Activated B cell treated with CpG ODN at 0.5 μM for 24 hours (primary cell): ENCODE measurements at regions of chr1 and their contacts with region 1.

Region 1: GRCh38 chr1:206030714-206031113 is 7.0 kb upstream of the CTSE start:
- DNase-seq: peak; percentile 56
- ATAC-seq: peak; percentile 79
- H3K4me3 Mint-ChIP-seq: no peak overlapping the region
- H3K27ac Mint-ChIP-seq: peak overlapping the region; percentile 72
- H3K4me1 Mint-ChIP-seq: peaks cover 51% of the 10 kb centered on the region
- H3K27me3 Mint-ChIP-seq: no peaks in the 10 kb centered on the region
- CTCF ChIP-seq: peak; percentile 75

Region 2: GRCh38 chr1:205977402-205978014 is 53.2 kb before region 1 on chr1:
- CTCF ChIA-PET with region 1: interaction called, 60 read pairs
- POLR2A ChIA-PET with region 1: no interaction called
- intact Hi-C with region 1: no loop called
- DNase-seq: peak; percentile 65
- ATAC-seq: peak; percentile 95
- H3K4me3 Mint-ChIP-seq: no peak overlapping the region
- H3K27ac Mint-ChIP-seq: no peak overlapping the region
- H3K4me1 Mint-ChIP-seq: no peaks in the 10 kb centered on the region
- H3K27me3 Mint-ChIP-seq: peaks cover 2% of the 10 kb centered on the region
- CTCF ChIP-seq: peak; percentile 83

Region 3: DNA sequence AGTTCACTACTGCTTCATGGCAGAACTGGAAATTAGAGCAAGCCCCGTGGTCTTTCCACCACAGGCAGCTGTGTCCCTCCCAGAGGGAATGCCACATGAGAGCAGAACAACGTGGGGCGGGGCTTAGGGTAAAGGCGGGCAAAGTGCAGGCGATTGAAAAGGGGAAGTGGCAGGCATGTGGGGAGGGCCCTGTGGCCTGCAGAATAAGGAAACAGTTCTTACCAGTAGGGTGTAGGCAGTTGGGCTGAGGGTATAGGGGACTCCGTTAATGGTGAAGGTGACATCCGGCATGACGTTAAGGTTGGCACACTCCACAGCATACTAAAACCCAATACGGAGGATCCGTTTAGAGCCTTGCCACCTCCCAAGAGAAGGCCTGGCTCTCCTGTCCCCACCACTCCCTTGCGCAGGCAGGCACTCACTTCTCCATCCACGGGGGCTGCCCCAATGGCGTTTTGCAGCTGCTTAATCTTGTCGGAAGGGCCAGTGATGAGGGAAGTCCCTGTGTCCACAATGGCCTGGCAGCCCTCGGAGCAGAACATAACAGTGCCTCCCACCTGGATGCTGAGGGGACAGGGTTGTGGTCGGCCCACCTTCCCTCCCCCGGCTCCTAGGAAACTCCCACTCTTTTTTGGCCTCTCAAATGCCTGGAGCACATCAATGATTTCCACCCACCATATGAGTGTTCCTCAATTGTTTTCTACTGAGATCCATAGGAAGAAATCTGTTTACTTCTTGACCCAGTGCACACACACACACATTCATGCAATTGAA is 18.4 kb before region 1 on chr1:
- CTCF ChIA-PET with region 1: interaction called, 8 read pairs
- POLR2A ChIA-PET with region 1: interaction called, 5 read pairs
- intact Hi-C with region 1: loop called (anchors 1 kb)
- DNase-seq: peak; percentile 79
- ATAC-seq: peak; percentile 99
- H3K4me3 Mint-ChIP-seq: peak overlapping the region; percentile 70
- H3K27ac Mint-ChIP-seq: peak overlapping the region; percentile 91
- H3K4me1 Mint-ChIP-seq: peaks cover 27% of the 10 kb centered on the region
- H3K27me3 Mint-ChIP-seq: no peaks in the 10 kb centered on the region
- CTCF ChIP-seq: no peak

Region 4: DNA sequence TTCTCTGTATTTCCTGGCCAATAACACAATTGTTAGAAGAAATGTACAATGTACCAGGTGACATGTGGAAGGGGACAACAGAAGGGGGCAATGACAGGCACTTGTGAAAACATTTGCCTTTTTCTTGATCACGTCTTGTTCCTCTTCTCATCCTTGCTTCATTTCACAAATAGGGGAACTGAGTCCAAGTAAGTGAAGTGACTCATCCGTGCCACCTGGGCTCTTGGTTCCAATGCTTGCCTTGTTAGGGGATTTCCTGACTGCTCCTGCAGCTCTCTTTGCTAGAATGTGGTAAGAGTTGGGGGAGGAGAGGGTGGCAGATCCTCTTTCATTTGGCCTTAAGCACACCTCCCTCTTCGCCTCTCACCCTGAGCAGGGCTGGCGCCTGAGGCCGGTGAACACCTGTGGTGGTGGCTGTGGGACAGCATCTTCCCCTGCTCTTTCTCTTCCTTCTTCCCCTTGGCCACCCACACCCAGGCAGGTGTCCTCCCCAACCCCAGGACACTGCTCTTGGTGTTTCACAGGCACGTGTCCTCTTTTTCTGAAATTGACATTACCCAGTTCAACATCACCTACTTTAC is 20.0 kb after region 1 on chr1:
- CTCF ChIA-PET with region 1: interaction called, 30 read pairs
- POLR2A ChIA-PET with region 1: interaction called, 101 read pairs
- intact Hi-C with region 1: loop called (anchors 1 kb)
- DNase-seq: peak; percentile 71
- ATAC-seq: peak; percentile 86
- H3K4me3 Mint-ChIP-seq: peak overlapping the region; percentile 58
- H3K27ac Mint-ChIP-seq: peak overlapping the region; percentile 95
- H3K4me1 Mint-ChIP-seq: peaks cover 94% of the 10 kb centered on the region
- H3K27me3 Mint-ChIP-seq: no peaks in the 10 kb centered on the region
- CTCF ChIP-seq: no peak

Region 5: DNA sequence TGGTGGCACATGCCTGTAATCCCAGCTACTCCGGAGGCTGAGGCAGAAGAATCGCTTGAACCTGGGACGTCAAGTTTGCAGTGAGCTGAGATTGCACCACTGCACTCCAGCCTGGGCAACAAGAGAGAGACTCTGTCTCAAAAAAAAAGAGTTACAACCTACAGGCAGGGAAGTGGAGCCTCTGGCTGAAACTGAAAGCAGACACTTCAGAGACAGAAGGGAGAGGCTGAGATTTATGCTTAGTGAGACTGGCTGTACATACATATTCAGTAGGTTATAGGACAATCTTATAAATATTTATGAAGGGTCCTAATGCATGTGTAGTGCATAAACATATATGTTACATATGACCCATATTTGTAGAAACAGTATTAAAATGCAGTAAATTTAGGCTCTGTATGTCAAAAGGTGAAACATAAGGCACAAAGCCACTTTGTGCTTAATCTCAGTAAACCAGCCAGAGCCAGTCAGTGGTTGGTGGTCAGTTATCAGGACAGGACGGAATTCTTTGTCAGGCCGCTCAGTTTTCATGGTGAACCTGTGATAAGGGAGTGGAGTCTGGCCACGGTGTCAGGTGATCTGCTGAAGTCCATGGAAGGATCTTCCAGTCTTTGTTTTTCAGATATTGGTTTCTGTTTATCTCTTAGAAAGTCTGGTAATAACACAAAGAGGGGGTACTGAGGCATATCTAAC is 35.9 kb after region 1 on chr1:
- CTCF ChIA-PET with region 1: interaction called, 18 read pairs
- POLR2A ChIA-PET with region 1: interaction called, 7 read pairs
- intact Hi-C with region 1: loop called (anchors 1 kb)
- DNase-seq: no peak
- ATAC-seq: peak; percentile 78
- H3K4me3 Mint-ChIP-seq: peak overlapping the region; percentile 73
- H3K27ac Mint-ChIP-seq: peak overlapping the region; percentile 85
- H3K4me1 Mint-ChIP-seq: peaks cover 57% of the 10 kb centered on the region
- H3K27me3 Mint-ChIP-seq: no peaks in the 10 kb centered on the region
- CTCF ChIP-seq: no peak

Region 6: DNA sequence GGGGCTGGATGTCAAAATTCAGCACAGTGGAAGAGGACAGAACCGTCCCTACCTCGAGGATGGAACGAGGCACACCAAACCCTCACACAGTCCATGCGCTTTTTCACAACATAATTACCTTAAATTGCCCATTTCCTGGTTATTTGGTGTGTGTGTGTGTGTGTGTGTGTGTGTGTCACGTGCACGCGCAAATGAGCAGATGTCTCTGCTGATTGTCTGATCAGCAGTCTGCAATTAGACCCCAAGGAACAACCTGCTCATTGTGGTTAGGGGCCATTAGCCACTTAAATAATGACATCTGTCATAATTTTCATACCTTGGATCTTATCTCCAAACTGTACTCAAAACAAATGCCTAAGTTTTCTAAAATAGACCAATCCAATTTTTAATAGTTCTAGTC is 63.3 kb after region 1 on chr1:
- CTCF ChIA-PET with region 1: interaction called, 15 read pairs
- POLR2A ChIA-PET with region 1: interaction called, 3 read pairs
- intact Hi-C with region 1: no loop called
- DNase-seq: no peak
- ATAC-seq: no peak
- H3K4me3 Mint-ChIP-seq: no peak overlapping the region
- H3K27ac Mint-ChIP-seq: peak overlapping the region; percentile 46
- H3K4me1 Mint-ChIP-seq: peaks cover 9% of the 10 kb centered on the region
- H3K27me3 Mint-ChIP-seq: no peaks in the 10 kb centered on the region
- CTCF ChIP-seq: no peak